ENCODE measurements at regions of chr19 and their contacts with region 1.

Region 1: DNA sequence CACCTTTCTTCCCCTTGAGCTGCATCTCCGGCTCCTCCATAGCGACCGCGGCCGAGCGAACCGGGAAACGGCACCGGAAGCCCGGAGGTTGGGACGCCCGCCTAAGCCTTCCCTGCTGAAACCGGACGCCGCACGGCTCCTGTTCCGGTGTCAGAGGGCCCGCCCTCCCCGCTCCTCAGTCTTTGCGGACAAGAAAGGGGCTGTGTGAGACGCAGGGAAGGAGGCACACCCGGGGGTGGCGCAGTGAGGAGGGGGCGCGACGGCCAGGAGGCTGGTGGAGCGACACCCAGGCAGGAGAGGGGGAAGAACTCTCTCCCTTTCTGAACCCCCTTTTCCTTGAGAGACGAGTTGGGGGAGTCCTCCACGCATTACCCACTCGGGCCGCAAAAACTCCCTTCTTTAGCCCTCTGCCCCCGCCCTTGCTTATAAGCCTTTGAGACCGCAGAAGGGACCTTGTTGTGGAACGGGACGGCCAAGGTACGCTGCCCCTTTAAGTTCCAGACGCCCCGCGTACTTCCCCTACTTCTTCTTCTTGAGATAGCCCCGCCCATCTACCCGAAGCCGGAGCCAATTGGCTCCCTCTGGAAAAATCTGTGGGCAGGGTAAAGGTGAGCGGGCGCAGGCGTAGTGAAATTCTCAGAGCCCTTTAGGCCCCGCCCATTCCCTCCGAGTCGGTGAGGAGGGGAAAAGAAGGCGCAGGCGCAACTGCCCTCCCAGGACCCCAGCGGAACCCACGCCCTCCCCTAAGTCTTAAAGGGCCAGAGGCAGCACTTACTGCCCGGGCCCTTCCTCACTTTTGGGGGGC is at the starts of genes BORCS8 and RFXANK:
- DNase-seq: peak; percentile 95
- H3K4me3 Mint-ChIP-seq: peak within 1 kb of the TSS; percentile 86
- H3K27ac Mint-ChIP-seq: peak within 1 kb of the TSS; percentile 77
- H3K4me1 Mint-ChIP-seq: peaks cover 6% of the 10 kb centered on the region
- H3K27me3 Mint-ChIP-seq: no peaks in the 10 kb centered on the region
- CTCF ChIP-seq: no peak
- total RNA-seq, gene BORCS8: 24.0 and 26.3 TPM in 2 replicates
- total RNA-seq, gene RFXANK: 63.2 and 66.5 TPM in 2 replicates

Region 2: GRCh38 chr19:19203012-19203856 is 11.0 kb after region 1 on chr19 and contains the start of gene NR2C2AP:
- CTCF ChIA-PET with region 1: interaction called, 4 read pairs
- intact Hi-C with region 1: loop called (anchors 1 kb)
- DNase-seq: peak; percentile 84
- H3K4me3 Mint-ChIP-seq: peak within 1 kb of the TSS; percentile 82
- H3K27ac Mint-ChIP-seq: peak within 1 kb of the TSS; percentile 47
- H3K4me1 Mint-ChIP-seq: no peaks in the 10 kb centered on the region
- H3K27me3 Mint-ChIP-seq: peaks cover 22% of the 10 kb centered on the region
- CTCF ChIP-seq: no peak
- total RNA-seq, gene NR2C2AP: 20.6 and 23.2 TPM in 2 replicates

Measured in Calu3 (cell line).